ENCODE measurements at regions of chr1 and their contacts with region 1.

Region 1: GRCh38 chr1:223378754-223379153 is 14.5 kb upstream of the CCDC185 start:
- DNase-seq: no peak

Region 2: GRCh38 chr1:223326776-223327175 is 52.0 kb before region 1 on chr1:
- intact Hi-C with region 1: loop called (anchors 2 kb)
- DNase-seq: no peak

Region 3: DNA sequence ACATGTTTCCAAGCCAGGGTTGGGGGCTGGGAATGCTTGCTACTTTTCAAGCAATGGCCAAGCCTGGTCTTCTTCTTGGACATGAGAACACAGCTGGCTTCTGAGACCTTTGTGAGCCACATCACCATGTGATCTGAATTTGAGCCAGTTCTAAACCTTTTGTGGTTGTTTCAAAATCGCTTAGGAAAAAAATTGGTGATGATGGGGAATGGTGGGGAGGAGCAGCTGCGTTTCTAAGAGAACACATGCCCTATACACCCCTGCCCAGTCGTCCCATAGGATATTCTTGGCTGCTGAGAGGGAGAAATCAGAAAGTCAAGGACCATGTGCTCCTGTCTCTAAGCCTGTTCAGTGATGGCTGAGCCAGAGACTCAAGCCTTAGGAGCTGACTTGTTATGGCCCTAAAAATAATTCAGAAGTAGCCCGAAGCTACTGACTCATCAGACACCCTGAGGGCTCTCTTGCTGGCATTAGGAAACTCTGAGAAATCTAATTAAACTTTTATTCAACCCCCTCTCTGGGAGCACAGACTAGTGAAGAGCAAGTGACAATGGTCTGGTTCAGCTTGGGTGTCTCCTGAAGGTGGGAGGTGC is 45.0 kb after region 1 on chr1:
- intact Hi-C with region 1: no loop called
- DNase-seq: no peak

Measured in cardiac septum (tissue), 1 donor.